ENCODE measurements at regions of chr20 and their contacts with region 1.

Region 1: GRCh38 chr20:46022411-46023147 is 6.4 kb upstream of the SLC12A5 start:
- DNase-seq: peak; percentile 87
- ATAC-seq: peak; percentile 7; the same call in 1 of the 2 replicates
- H3K4me3 Mint-ChIP-seq: peak overlapping the region; percentile 76
- H3K27ac Mint-ChIP-seq: peak overlapping the region; percentile 28; the same call in 1 of the 2 replicates
- H3K4me1 Mint-ChIP-seq: peaks cover 7% of the 10 kb centered on the region
- H3K27me3 Mint-ChIP-seq: peaks cover 50% of the 10 kb centered on the region
- CTCF ChIP-seq: peak; percentile 79

Region 2: DNA sequence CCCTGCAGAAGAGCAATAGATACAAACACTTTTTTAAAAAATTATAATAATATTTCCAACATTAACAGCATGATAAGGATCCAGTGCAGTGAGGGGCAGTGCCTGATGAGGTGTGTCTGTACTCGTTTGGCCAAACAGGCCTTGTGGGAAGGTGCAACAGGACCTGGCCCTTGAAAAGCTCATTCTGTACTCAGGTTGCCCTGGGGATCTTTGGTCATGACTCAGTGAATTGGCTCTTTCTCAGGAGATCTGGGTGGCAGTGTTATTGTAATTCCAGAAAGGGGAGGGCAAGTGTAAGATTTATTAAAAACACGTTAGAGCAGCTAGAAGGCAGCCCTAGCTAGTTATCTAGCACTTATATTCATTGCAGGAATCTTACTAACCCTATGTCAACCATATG is 504.3 kb before region 1 on chr20:
- CTCF ChIA-PET with region 1: no interaction called
- POLR2A ChIA-PET with region 1: no interaction called
- DNase-seq: no peak
- ATAC-seq: no peak
- H3K4me3 Mint-ChIP-seq: no peak overlapping the region
- H3K27ac Mint-ChIP-seq: no peak overlapping the region
- H3K4me1 Mint-ChIP-seq: no peaks in the 10 kb centered on the region
- H3K27me3 Mint-ChIP-seq: no peaks in the 10 kb centered on the region; the same call in 1 of the 2 replicates
- CTCF ChIP-seq: no peak

Region 3: GRCh38 chr20:45963059-45964005 is 59.2 kb before region 1 on chr20:
- CTCF ChIA-PET with region 1: no interaction called
- POLR2A ChIA-PET with region 1: no interaction called
- DNase-seq: no peak
- ATAC-seq: peak; percentile 73
- H3K4me3 Mint-ChIP-seq: no peak overlapping the region
- H3K27ac Mint-ChIP-seq: peak overlapping the region; percentile 52; the same call in 1 of the 2 replicates
- H3K4me1 Mint-ChIP-seq: no peaks in the 10 kb centered on the region
- H3K27me3 Mint-ChIP-seq: no peaks in the 10 kb centered on the region
- CTCF ChIP-seq: 0 out of 2 replicates have a peak, but pooled peaks have one; percentile 21

Region 4: DNA sequence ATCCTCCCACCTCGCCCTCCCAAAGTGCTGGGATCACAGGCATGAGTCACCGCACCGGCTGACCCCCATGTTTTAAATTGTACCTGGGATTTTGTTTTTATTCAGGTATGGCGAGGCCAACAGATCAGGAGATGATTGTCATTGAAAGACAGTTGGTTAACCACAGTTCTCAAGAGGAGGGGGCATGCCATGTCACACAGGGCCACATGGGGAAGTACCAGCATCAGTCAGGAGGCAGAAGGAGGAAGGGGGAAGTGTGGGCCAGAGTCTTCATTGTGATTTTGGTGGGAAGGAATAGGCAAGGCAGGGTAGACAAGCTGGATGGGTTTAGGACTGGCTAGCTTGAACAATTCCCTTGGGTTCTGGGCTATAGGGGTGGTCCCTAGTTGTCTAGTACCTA is 23.8 kb before region 1 on chr20:
- CTCF ChIA-PET with region 1: interaction called, 12 read pairs
- POLR2A ChIA-PET with region 1: no interaction called
- DNase-seq: no peak
- ATAC-seq: no peak
- H3K4me3 Mint-ChIP-seq: no peak overlapping the region
- H3K27ac Mint-ChIP-seq: peak overlapping the region; percentile 68; the same call in 1 of the 2 replicates
- H3K4me1 Mint-ChIP-seq: peaks cover 66% of the 10 kb centered on the region
- H3K27me3 Mint-ChIP-seq: no peaks in the 10 kb centered on the region; the same call in 1 of the 2 replicates
- CTCF ChIP-seq: no peak

Region 5: GRCh38 chr20:46076806-46077205 is 54.2 kb after region 1 on chr20:
- CTCF ChIA-PET with region 1: interaction called, 10 read pairs
- POLR2A ChIA-PET with region 1: no interaction called
- DNase-seq: no peak
- ATAC-seq: peak; percentile 28
- H3K4me3 Mint-ChIP-seq: no peak overlapping the region
- H3K27ac Mint-ChIP-seq: peak overlapping the region; percentile 64; the same call in 1 of the 2 replicates
- H3K4me1 Mint-ChIP-seq: peaks cover 23% of the 10 kb centered on the region
- H3K27me3 Mint-ChIP-seq: no peaks in the 10 kb centered on the region
- CTCF ChIP-seq: no peak

Measured in WTC11 (cell line).